ENCODE measurements at regions of chr19 and their contacts with region 1.

Region 1: DNA sequence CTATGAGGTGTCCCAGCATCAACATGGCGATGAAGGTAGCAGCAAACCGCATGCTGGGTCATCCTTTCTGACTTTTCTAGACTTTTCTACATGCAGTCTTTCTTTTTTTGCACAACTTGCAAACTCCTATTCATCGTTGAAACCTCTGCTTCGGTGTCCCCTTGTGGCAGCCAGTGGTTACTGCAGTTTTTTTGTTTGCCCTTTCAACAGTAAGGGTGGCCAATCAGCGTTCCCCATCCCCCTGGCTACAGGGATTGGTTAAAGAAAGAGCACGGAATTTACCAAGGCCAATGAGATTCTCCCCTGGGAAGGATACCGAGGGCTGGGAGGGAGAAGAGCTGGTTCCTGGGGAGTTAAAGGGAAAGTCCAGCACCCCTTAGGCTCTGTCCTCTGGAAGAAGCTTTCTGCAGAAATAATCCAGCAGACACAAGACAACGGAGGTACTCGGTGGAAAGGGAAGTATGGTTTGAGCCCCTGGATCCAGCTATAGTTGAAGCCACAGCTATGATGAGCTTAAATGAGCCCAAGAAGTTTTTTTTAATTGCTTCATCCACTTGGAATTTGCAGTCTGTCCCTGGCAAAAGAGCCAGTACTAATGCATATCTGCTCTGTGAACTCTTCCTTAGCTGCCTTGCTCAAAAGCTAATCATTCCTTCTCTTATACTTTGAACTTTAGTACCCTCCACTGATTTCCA is 5.6 kb upstream of the LSM4 start:
- DNase-seq: peak; percentile 94
- ATAC-seq: peak; percentile 99
- H3K4me3 Mint-ChIP-seq: peak overlapping the region; percentile 65
- H3K27ac Mint-ChIP-seq: peak overlapping the region; percentile 69
- H3K4me1 Mint-ChIP-seq: peaks cover 20% of the 10 kb centered on the region
- H3K27me3 Mint-ChIP-seq: no peaks in the 10 kb centered on the region

Region 2: GRCh38 chr19:18251587-18252369 is 76.7 kb before region 1 on chr19:
- CTCF ChIA-PET with region 1: interaction called, 13 read pairs
- POLR2A ChIA-PET with region 1: interaction called, 3 read pairs
- intact Hi-C with region 1: loop called in 1 of 2 experiments (anchors 1 kb)
- DNase-seq: peak; percentile 89
- ATAC-seq: peak; percentile 95
- H3K4me3 Mint-ChIP-seq: no peak overlapping the region
- H3K27ac Mint-ChIP-seq: no peak overlapping the region
- H3K4me1 Mint-ChIP-seq: no peaks in the 10 kb centered on the region
- H3K27me3 Mint-ChIP-seq: peaks cover 21% of the 10 kb centered on the region

Region 3: DNA sequence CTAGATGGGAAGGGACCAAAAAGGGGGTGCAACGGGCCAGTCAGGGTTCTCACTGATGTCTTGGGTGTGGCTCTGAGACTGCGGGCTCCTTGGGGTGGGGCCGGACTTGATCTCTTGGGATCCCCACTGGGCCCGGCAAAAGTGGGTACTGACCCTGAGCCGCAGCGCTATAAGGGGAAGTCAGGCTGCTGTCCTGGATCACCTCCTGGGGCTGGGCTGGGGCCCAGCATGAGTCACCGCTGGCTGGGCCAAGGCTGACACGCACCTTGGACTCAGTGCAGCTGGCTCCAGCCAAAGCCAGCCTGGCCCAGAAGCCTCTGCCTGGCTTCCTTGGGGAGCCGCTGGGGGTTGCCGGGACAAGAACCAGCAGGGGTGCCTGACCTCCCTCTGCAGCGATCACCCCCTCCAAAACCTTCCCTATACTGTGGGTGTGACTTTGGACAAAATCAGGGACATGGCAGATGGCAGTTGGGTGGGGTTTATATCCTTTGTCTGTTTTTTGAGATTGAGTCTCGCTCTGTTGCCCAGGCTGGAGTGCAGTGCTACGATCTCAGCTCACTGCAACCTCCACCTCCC is 53.6 kb before region 1 on chr19:
- CTCF ChIA-PET with region 1: interaction called, 208 read pairs
- POLR2A ChIA-PET with region 1: interaction called, 42 read pairs
- intact Hi-C with region 1: loop called (anchors 1 kb)
- DNase-seq: peak; percentile 36
- ATAC-seq: no peak
- H3K4me3 Mint-ChIP-seq: peak overlapping the region; percentile 3
- H3K27ac Mint-ChIP-seq: peak overlapping the region; percentile 8
- H3K4me1 Mint-ChIP-seq: peaks cover 35% of the 10 kb centered on the region
- H3K27me3 Mint-ChIP-seq: no peaks in the 10 kb centered on the region

Region 4: DNA sequence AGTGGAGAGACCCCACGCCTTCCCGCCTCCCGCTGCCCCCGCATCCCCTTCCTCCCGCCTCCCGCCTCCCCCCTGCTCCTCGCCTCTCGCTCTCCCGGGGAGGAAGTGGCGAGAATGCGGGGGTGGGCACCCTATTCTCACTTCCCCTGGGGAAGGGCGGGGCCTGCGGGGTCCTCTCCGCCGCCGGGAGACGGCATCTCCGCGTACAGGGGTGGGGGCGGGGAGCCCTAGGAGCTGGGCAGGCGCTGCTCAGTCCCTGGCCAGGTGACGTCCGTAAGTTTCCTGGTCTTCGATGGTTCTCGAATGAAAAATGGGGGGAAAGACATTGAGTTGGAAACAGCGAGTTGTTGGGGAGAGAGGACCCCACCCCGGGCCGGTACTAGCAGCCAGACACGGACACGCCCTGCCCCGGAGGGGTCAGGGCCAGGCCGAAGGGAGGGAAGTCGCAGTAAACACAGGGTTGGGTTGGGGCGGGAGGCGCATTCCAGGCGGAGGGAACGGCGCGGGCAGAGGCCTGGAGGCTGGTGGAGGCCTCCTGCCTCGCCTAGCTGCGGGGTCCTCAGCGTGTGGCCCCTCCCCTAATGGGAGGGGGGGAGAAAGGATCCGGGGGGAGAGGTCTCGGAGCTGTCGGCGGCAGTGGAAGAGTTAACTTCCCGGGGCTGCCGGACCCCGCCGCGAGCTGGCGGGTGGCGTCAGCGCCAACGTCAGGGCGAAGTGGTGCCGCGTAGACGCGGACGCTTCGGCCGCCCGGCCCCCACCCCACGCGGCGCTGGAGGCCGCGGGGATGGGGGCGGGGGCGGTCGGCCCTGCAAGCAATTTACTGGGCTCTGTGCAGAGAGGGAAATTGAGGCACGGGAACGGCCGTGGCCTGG is 36.7 kb before region 1 on chr19:
- CTCF ChIA-PET with region 1: interaction called, 10 read pairs
- POLR2A ChIA-PET with region 1: interaction called, 3 read pairs
- intact Hi-C with region 1: loop called in 1 of 2 experiments (anchors 1 kb)
- DNase-seq: peak; percentile 96
- ATAC-seq: peak; percentile 38
- H3K4me3 Mint-ChIP-seq: peak overlapping the region; percentile 87
- H3K27ac Mint-ChIP-seq: peak overlapping the region; percentile 99
- H3K4me1 Mint-ChIP-seq: peaks cover 63% of the 10 kb centered on the region
- H3K27me3 Mint-ChIP-seq: no peaks in the 10 kb centered on the region

Region 5: GRCh38 chr19:18304458-18305310 is 23.8 kb before region 1 on chr19:
- CTCF ChIA-PET with region 1: interaction called, 5 read pairs
- POLR2A ChIA-PET with region 1: interaction called, 16 read pairs
- intact Hi-C with region 1: loop called in 1 of 2 experiments (anchors 1 kb)
- DNase-seq: peak; percentile 93
- ATAC-seq: peak; percentile 81
- H3K4me3 Mint-ChIP-seq: peak overlapping the region; percentile 84
- H3K27ac Mint-ChIP-seq: peak overlapping the region; percentile 97
- H3K4me1 Mint-ChIP-seq: peaks cover 50% of the 10 kb centered on the region
- H3K27me3 Mint-ChIP-seq: no peaks in the 10 kb centered on the region

Region 6: DNA sequence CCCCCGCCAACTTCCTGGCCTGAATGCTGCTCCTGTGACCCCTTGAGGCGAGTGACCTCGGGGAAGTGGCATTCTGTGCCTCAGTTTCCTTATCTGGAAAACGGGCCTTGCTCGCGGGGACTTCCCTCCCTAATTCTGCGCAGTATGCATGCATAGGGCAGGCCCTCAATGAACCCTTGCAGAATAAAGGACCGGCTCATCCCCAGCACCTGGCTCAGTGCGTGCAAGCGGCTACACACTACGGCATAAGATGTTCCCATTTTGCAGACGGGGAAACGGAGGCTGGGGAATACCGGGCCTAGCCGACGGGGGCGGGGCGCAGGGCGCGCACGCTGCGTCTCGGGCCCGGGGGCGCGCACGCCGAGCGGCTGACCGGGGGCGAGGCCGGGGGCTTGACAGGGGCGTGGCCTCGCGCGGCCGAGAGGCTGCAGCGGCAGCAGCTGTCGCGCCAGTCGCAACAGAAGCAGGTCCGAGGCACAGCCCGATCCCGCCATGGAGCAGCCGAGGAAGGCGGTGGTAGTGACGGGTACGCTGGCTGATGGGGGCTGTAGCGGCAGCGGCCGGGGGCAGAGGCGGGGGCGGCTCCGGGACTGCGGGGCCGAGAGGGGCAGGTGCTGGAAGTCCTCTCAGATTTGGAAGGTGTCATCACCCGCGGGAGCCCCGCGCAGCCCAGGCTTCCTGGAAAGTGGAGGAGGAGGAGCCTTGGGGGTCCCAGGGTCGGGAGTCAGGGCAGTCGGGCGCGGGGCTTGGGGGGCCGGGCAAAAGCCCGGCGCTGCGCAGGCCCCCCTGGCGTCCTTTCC is 11.9 kb after region 1 on chr19 and contains the start of gene PGPEP1:
- CTCF ChIA-PET with region 1: interaction called, 47 read pairs
- POLR2A ChIA-PET with region 1: interaction called, 4 read pairs
- intact Hi-C with region 1: loop called in 1 of 2 experiments (anchors 1 kb)
- DNase-seq: peak; percentile 78
- ATAC-seq: peak; percentile 53
- H3K4me3 Mint-ChIP-seq: peak within 1 kb of the TSS; percentile 69
- H3K27ac Mint-ChIP-seq: peak within 1 kb of the TSS; percentile 93
- H3K4me1 Mint-ChIP-seq: peaks cover 19% of the 10 kb centered on the region
- H3K27me3 Mint-ChIP-seq: no peaks in the 10 kb centered on the region
- total RNA-seq, gene PGPEP1: 20.0 to 20.9 TPM

Region 7: DNA sequence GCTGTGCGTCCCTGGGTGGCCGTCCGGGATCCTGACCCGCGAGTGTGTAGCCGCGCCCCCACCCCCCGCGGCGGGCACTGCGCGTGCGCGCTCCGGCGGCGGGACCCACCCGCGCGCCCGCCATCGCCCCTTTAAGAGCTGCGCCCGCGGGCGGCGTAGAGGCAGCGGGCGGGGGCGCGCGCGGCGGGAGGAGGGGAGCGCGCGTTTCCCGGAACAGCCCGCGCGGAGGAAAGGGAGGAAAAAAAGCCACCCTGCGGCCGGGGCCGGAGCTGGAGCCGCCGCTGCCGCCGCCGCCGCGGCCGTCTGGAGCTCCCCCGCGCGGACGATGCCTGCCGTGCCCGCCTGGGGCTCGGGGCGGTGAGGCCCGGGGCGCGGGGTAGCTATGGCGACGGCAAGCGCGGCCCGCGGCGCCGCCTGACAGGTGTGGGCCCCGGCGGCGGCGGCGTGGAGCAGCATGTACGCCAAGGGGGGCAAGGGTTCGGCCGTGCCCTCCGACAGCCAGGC is 90.8 kb after region 1 on chr19 and contains the start of gene SSBP4:
- CTCF ChIA-PET with region 1: interaction called, 8 read pairs
- POLR2A ChIA-PET with region 1: no interaction called
- intact Hi-C with region 1: loop called in 1 of 2 experiments (anchors 5 kb)
- DNase-seq: peak; percentile 82
- ATAC-seq: peak; percentile 45
- H3K4me3 Mint-ChIP-seq: peak within 1 kb of the TSS; percentile 90
- H3K27ac Mint-ChIP-seq: peak within 1 kb of the TSS; percentile 80
- H3K4me1 Mint-ChIP-seq: peaks cover 79% of the 10 kb centered on the region
- H3K27me3 Mint-ChIP-seq: peaks cover 23% of the 10 kb centered on the region
- total RNA-seq, gene SSBP4: 71.7 to 79.3 TPM